Endothelial cell of umbilical vein (primary cell): ENCODE measurements at regions of chr19 and their contacts with region 1.

Region 1: GRCh38 chr19:50870417-50871089 is 2.7 kb upstream of the KLK2 start:
- DNase-seq: no peak
- H3K4me3 ChIP-seq: no peak overlapping the region
- H3K27ac ChIP-seq: no peak overlapping the region
- H3K4me1 ChIP-seq: no peaks in the 10 kb centered on the region
- H3K27me3 ChIP-seq: no peaks in the 10 kb centered on the region
- CTCF ChIP-seq: peak in 1 of 2 donors; percentile 12
- POLR2A ChIP-seq: no peak

Region 2: DNA sequence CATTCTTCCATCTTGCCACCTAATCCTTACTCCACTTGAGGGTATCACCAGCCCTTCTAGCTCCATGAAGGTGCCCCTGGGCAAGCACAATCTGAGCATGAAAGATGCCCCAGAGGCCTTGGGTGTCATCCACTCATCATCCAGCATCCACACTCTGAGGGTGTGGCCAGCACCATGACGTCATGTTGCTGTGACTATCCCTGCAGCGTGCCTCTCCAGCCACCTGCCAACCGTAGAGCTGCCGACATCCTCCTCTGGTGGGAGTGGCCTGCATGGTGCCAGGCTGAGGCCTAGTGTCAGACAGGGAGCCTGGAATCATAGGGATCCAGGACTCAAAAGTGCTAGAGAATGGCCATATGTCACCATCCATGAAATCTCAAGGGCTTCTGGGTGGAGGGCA is 18.9 kb before region 1 on chr19:
- CTCF ChIA-PET with region 1: no interaction called
- POLR2A ChIA-PET with region 1: interaction called, 3 read pairs
- dilution Hi-C with region 1: no loop called
- intact Hi-C with region 1: loop called (anchors 1 kb)
- DNase-seq: no peak
- H3K4me3 ChIP-seq: no peak overlapping the region
- H3K27ac ChIP-seq: no peak overlapping the region
- H3K4me1 ChIP-seq: no peaks in the 10 kb centered on the region
- H3K27me3 ChIP-seq: no peaks in the 10 kb centered on the region
- CTCF ChIP-seq: no peak
- POLR2A ChIP-seq: no peak

Region 3: DNA sequence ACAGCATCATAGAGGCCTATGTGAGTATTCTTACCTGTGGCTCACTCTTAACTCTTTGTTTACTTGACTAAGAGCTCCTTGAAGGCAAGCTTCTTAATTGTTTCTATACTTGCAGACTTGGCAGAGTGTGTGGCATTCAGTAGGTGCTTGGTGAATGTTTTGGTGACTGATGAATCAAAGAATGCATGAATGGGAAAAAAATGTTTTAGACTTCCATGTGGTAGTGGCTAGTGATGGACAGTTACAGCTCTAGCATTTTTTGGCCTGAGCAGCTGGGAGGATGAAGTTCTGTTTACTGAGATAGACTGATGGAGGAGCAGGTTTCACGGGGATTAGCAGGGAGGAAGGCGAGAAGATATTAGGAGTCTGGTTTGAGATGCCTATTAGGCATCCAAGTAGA is 839.6 kb after region 1 on chr19:
- CTCF ChIA-PET with region 1: no interaction called
- POLR2A ChIA-PET with region 1: interaction called, 10 read pairs
- dilution Hi-C with region 1: no loop called
- intact Hi-C with region 1: no loop called
- DNase-seq: no peak
- H3K4me3 ChIP-seq: no peak overlapping the region
- H3K27ac ChIP-seq: no peak overlapping the region
- H3K4me1 ChIP-seq: no peaks in the 10 kb centered on the region
- H3K27me3 ChIP-seq: no peaks in the 10 kb centered on the region
- CTCF ChIP-seq: no peak
- POLR2A ChIP-seq: no peak